Activated CD4-positive, alpha-beta T cell treated with anti-CD3 and anti-CD28 coated beads, Interleukin-2, amount 10 ng/mL, durations not matched to agents 24 days and 14 days (primary cell): ENCODE measurements at regions of chr2 and their contacts with region 1.

Region 1: DNA sequence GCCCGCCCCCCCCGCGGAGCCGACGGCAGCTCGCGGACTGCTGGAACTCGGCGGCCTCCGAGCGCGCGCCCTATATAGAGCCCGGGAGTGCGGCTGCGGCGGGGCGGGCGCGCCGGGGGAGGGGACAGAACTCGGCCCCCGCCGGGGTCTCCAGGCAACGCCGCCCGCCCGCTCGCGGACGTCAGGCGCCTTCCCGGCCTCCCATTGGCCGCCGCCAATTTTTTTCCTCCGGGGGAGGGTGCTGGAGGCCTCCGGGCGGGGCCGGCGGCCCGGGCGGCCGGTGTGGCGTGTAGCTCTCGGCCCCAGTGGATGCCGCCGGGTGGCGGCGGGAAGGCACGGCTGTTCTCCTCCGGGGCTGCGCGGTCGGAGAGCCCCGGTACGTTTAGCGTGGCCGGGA is at the start of gene ZFP36L2:
- DNase-seq: peak; percentile 99
- H3K4me3 Mint-ChIP-seq: peak within 1 kb of the TSS; percentile 99
- H3K27ac Mint-ChIP-seq: peak within 1 kb of the TSS; percentile 97
- H3K4me1 Mint-ChIP-seq: peaks cover 35% of the 10 kb centered on the region
- H3K27me3 Mint-ChIP-seq: peaks cover 2% of the 10 kb centered on the region
- total RNA-seq, gene ZFP36L2: 92.8 and 93.1 TPM in 2 replicates

Region 2: GRCh38 chr2:42810121-42810970 is 416.2 kb before region 1 on chr2:
- intact Hi-C with region 1: loop called (anchors 2 kb)
- DNase-seq: peak; percentile 99
- H3K4me3 Mint-ChIP-seq: peak overlapping the region; percentile 97
- H3K27ac Mint-ChIP-seq: peak overlapping the region; percentile 100
- H3K4me1 Mint-ChIP-seq: peaks cover 20% of the 10 kb centered on the region
- H3K27me3 Mint-ChIP-seq: peaks cover 15% of the 10 kb centered on the region

Region 3: GRCh38 chr2:42947809-42948600 is 278.6 kb before region 1 on chr2:
- intact Hi-C with region 1: loop called (anchors 1 kb)
- DNase-seq: no peak
- H3K4me3 Mint-ChIP-seq: no peak overlapping the region
- H3K27ac Mint-ChIP-seq: no peak overlapping the region
- H3K4me1 Mint-ChIP-seq: peaks cover 3% of the 10 kb centered on the region
- H3K27me3 Mint-ChIP-seq: peaks cover 3% of the 10 kb centered on the region

Region 4: DNA sequence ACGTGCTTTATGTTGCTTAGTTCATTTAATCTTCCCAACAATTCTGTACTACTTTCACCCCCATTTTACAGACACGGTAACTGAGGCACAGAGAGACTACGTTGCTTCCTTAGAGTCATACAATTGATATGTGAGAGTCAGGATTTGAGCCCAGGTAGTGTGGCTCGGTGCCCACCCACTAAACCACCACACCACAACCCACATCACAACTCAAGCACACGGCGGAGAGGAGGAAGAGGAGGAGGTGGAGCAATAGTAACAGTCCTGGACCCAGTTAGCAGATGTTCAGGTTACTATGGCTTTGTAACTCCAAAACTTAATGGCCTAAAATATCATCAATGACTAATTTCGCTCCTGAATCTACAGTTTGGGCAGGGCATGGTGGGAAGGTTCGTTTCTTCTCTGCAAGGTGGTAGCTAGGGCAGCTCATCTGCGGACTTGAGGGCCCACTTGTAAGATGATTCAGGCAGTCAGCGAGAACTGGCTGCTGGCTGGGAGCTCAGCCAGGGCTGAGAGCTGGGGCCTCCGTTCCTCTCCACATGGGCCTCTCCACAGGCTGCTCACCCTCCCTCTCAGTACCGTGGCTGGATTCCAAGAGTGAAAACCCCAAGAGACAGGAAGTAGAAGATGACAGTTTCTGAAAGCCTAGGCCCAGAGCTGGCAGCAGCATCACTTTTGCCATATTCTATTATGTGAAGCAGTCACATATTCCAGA is 167.2 kb before region 1 on chr2:
- intact Hi-C with region 1: loop called (anchors 2 kb)
- DNase-seq: peak; percentile 80
- H3K4me3 Mint-ChIP-seq: peak overlapping the region; percentile 10
- H3K27ac Mint-ChIP-seq: peak overlapping the region; percentile 35
- H3K4me1 Mint-ChIP-seq: peaks cover 22% of the 10 kb centered on the region
- H3K27me3 Mint-ChIP-seq: peaks cover 5% of the 10 kb centered on the region

Region 5: DNA sequence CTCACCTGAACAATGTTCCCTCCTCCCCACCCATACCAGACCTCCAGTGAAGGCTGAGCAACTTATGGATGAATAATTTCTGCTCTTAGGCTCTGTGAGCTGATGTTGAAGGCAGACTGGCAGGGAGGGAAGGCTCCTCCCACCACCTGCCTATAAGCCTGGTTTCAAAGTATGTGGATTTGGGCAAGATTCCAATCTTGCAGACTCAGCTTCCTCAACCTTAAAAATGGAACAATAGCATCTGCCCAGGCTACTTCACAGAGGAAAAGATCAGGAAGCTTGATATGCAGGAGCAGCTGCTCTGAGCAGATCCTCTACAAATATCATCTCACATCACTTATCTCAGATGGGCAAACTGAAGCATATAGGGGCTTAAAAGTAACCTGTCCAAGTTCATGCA is 112.3 kb before region 1 on chr2:
- intact Hi-C with region 1: no loop called
- DNase-seq: no peak
- H3K4me3 Mint-ChIP-seq: no peak overlapping the region
- H3K27ac Mint-ChIP-seq: no peak overlapping the region
- H3K4me1 Mint-ChIP-seq: peaks cover 5% of the 10 kb centered on the region
- H3K27me3 Mint-ChIP-seq: no peaks in the 10 kb centered on the region

Region 6: GRCh38 chr2:43139996-43140621 is 86.4 kb before region 1 on chr2:
- intact Hi-C with region 1: no loop called
- DNase-seq: peak; percentile 83
- H3K4me3 Mint-ChIP-seq: peak overlapping the region; percentile 62
- H3K27ac Mint-ChIP-seq: peak overlapping the region; percentile 85
- H3K4me1 Mint-ChIP-seq: peaks cover 63% of the 10 kb centered on the region
- H3K27me3 Mint-ChIP-seq: no peaks in the 10 kb centered on the region

Region 7: DNA sequence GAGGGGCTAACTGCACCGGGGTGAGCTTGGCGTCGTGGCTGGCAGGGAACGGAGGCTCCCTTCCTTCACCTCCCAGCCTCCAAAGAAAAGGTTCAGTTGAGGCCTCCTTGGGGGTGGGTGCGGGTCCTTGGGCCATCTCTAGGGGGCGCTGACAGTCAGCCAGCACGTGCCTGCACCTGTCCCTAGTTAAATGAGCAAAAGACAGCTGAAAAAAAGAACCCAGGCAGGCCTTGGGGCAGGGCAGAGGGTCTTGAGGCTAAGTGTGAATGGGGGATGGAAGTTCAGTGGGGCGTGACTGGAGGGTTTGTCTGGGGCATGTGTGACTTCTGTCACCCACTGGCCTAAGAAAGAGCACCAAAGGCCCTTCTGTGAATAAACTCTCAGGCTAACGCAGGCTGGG is 56.6 kb before region 1 on chr2:
- intact Hi-C with region 1: loop called (anchors 1 kb)
- DNase-seq: peak; percentile 90
- H3K4me3 Mint-ChIP-seq: peak overlapping the region; percentile 77
- H3K27ac Mint-ChIP-seq: peak overlapping the region; percentile 97
- H3K4me1 Mint-ChIP-seq: peaks cover 67% of the 10 kb centered on the region
- H3K27me3 Mint-ChIP-seq: no peaks in the 10 kb centered on the region

Region 8: DNA sequence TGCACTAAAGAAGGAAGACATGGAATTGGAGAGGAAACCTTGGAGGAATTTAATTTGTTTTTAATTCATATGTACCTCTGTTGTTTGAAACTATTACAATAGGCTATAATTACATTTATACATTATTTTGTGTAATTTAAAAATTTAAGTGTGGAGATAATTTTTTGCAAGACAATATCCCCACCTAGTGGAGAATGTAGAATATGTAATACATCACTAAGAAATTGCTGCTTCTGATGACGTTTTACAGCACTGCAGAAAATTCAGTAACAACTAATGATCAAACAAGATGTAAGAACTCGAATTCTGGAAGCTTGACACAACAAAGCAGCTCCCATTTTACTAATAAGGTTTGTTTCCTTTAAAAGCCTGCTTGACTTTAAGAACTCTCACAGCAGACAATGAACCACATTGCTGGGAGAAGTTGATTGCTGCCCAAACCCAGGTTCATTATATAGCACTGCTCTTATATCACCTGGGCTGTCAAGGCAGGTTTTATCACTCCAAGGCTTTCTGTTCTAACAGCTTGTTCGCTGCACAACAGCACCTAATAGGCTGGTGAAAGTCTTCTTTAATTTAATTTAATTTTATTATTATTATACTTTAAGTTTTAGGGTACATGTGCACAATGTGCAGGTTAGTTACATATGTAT is 315.9 kb after region 1 on chr2:
- intact Hi-C with region 1: loop called (anchors 2 kb)
- DNase-seq: peak; percentile 56
- H3K4me3 Mint-ChIP-seq: no peak overlapping the region
- H3K27ac Mint-ChIP-seq: no peak overlapping the region
- H3K4me1 Mint-ChIP-seq: peaks cover 8% of the 10 kb centered on the region
- H3K27me3 Mint-ChIP-seq: no peaks in the 10 kb centered on the region